Cardiac septum (tissue), 1 donor: ENCODE measurements at regions of chr15 and their contacts with region 1.

Region 1: DNA sequence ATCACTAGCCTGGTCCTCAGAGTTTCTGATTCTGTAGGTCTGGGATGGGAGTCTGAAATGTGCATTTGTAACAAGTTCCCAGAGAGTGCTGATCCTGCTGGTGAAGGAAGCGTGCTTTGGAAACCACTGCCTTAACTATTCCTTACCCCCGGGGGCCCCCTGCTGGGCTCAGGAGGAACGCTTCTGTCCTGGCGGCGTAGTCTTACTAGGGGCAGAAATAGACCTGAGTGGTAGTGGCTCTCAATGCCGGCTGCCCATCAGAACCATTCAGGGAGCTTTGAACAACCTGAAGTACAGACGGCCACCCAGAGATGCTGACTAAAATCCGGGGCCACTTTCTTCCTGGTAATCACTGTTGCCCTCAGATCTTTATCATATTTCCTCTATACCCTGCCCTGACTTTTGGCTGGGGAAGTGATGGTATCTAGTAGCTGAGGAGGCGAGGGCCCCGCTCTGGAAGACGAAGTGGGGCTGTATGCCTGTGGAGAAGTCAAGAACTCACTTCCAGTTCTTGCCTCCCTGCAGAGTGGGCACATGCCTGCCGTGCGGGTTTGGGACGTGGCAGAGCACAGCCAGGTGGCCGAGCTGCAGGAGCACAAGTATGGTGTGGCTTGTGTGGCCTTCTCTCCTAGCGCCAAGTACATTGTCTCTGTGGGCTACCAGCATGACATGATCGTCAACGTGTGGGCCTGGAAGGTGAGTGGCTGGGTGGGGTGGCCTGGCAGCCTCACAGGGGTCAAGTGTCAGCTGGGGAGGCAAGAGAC is 16.3 kb upstream of the JMJD7 start:
- DNase-seq: peak; percentile 91

Region 2: GRCh38 chr15:41557673-41558399 is 253.8 kb before region 1 on chr15:
- intact Hi-C with region 1: loop called (anchors 5 kb)
- DNase-seq: no peak

Region 3: DNA sequence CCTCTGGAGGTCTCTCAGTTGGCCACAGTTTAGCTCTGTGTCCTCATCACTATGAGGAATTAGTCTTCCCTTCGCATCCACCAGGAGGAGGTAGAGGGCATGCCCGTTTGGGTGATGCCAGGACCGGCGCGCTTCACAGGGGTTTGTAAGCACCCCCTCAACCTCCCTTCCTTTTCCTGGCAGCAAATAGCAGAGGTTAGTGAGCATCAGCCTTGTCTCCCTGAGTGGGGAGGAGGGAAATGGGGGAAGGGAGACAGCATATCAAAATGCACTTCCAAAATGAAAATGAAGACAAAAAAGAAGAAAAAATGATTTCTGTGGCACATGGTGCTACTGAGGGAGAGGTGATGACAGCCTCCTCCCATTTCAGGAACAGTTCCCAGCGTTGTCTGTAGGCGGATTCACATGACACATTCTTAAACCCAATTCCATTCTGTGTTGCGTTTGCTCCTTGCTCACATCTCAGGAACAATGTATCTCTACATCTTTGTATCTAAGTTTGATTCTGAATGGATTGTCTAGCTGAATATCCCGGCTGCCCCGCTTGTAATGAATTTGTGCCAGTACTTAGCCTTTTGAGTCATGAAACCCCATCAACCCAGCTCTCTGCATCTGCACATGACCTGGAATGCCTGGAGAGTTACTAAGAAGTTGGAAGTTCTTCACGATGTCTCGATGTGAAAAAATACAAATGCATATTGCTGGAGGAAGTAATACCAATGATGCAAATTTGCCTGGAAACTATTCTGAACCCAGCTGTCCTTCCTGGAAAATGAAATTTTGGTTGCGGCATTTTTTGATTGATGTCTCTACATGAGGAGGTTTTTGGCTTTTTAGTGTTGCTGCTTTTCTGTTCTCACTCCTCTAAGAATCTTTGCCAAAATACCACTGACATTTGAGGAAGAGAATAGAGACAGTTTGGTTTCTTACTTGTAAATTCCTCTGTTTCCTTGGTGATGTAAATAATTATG is 207.4 kb before region 1 on chr15:
- intact Hi-C with region 1: loop called (anchors 10 kb)
- DNase-seq: peak; percentile 78

Region 4: GRCh38 chr15:41695750-41696426 is 115.7 kb before region 1 on chr15:
- intact Hi-C with region 1: loop called (anchors 10 kb)
- DNase-seq: no peak

Region 5: DNA sequence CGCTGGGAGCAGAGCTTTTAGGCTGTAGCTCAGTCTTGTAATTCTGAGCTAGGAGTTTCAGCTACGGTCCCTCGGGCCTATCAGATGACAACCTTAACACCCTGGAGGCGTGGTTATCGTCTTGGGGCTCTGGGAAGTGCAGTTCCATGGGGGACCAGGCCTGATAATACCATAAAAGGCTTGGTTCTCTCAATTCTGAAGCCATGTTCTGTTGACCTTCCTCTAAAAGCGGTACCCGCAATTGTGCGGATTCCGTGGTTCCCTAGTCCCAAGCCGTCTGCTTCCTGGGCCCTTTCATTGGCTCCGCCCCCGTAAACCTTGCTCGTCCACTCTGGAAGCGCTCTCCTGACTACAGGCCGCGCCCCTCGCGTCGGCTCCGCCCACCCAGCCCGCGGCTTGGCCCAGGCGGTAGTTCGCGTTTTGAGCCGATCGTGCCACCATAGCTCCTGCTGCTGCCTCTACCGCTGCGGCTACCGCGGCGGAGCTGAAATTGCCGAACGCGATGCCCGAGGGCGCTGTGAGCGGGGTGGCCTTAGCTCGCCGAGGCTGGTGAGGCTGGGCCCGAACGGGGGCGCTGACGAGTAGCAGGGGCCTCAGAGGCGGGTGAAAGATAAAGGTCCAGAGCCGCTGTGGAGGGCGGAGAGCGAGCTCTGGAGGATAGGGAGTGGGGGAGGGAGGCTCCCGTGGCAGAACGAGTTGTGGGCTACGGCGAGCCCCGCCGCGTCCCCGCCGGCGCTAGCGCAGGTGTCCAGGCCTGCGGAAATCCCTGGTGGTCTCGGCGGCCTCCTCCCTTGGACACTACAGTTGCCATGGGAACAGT is 37.3 kb before region 1 on chr15 and contains the start of gene MAPKBP1:
- intact Hi-C with region 1: loop called (anchors 1 kb)
- DNase-seq: peak; percentile 99
- total RNA-seq, gene MAPKBP1: 15.6 TPM

Region 6: DNA sequence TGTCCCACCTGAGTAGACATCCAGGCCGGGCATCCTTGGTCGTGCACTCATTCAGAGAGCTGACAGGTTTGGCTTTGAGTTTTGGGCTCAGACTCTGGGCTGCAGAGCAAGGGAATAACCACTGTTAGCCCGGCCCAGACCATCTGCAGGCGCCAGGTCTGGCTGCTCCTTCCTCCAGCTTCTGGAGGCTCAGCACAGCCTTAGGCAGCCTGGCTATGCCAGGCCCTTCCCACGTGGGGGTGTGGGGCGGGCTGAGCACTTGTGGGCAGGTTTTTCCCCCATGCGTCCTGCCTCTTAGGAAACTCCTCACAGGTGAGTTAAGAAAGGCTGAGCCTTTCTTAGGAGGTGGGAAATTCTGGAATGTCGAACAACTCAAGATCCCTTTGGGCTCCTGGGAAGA is 38.2 kb after region 1 on chr15:
- intact Hi-C with region 1: no loop called
- DNase-seq: no peak